Heart right ventricle (tissue), 16 donors: ENCODE measurements at regions of chr19 and their contacts with region 1.

Region 1: GRCh38 chr19:36915992-36916830 is at the starts of genes ZNF568 and ZNF829:
- DNase-seq: peak; percentile 90 to 93
- ATAC-seq: peak; percentile 98 to 99 (median 98)
- H3K4me3 ChIP-seq: peak within 1 kb of the TSS; percentile 53 to 97 (median 72)
- H3K27ac ChIP-seq: peak within 1 kb of the TSS; percentile 88 to 99 (median 94)
- H3K4me1 ChIP-seq: peaks cover 0 to 21% (median 11%) of the 10 kb centered on the region in 9 donors
- H3K27me3 ChIP-seq: no peaks in the 10 kb centered on the region
- CTCF ChIP-seq: peak; percentile 26 to 82 (median 67)
- total RNA-seq, gene ZNF568: 6.9 to 11.5 (median 9.1) TPM
- total RNA-seq, gene ZNF829: 1.4 to 4.1 (median 2.8) TPM

Region 2: GRCh38 chr19:36796076-36796992 is 119.9 kb before region 1 on chr19:
- intact Hi-C with region 1: loop called in 1 of 10 experiments (anchors 5 kb)
- DNase-seq: no peak
- ATAC-seq: no peak
- H3K4me3 ChIP-seq: peak overlapping the region; percentile 40 to 95 (median 74)
- H3K27ac ChIP-seq: peak overlapping the region in 9 of 10 donors; percentile 62 to 93 (median 80)
- H3K4me1 ChIP-seq: peaks cover 0 to 20% (median 12%) of the 10 kb centered on the region in 9 donors
- H3K27me3 ChIP-seq: no peaks in the 10 kb centered on the region
- CTCF ChIP-seq: no peak

Region 3: DNA sequence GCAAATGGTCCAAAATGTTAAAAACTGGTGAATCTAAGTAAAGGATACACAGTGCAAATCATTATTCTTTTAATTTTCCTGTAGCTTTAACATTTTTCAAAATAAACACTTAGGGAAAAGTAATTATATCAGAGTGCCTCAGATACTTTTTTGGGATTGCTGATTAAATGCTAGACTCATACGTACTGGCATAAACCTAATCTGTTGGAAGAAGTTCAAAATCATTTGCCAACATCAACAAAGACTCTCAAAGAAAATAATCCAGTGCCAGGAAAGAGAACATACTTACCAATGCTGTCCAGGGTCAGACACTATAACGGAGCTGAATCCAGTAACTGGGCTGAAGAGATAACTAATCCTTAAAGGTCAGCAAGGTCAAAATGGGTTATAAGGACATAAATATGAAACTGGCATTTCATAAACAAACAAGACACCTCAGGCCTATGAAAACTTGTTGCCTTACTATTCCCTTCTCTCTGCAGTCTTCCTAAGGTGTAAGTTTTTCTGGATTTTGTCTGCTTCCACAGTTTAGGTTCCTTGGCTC is 158.7 kb after region 1 on chr19:
- intact Hi-C with region 1: no loop called
- DNase-seq: no peak
- ATAC-seq: no peak
- H3K4me3 ChIP-seq: no peak overlapping the region
- H3K27ac ChIP-seq: peak overlapping the region in 2 of 10 donors; percentile 32 to 53
- H3K4me1 ChIP-seq: peaks cover 2 to 31% (median 21%) of the 10 kb centered on the region in 9 donors
- H3K27me3 ChIP-seq: no peaks in the 10 kb centered on the region
- CTCF ChIP-seq: no peak